ENCODE measurements at regions of chr17 and their contacts with region 1.

Region 1: DNA sequence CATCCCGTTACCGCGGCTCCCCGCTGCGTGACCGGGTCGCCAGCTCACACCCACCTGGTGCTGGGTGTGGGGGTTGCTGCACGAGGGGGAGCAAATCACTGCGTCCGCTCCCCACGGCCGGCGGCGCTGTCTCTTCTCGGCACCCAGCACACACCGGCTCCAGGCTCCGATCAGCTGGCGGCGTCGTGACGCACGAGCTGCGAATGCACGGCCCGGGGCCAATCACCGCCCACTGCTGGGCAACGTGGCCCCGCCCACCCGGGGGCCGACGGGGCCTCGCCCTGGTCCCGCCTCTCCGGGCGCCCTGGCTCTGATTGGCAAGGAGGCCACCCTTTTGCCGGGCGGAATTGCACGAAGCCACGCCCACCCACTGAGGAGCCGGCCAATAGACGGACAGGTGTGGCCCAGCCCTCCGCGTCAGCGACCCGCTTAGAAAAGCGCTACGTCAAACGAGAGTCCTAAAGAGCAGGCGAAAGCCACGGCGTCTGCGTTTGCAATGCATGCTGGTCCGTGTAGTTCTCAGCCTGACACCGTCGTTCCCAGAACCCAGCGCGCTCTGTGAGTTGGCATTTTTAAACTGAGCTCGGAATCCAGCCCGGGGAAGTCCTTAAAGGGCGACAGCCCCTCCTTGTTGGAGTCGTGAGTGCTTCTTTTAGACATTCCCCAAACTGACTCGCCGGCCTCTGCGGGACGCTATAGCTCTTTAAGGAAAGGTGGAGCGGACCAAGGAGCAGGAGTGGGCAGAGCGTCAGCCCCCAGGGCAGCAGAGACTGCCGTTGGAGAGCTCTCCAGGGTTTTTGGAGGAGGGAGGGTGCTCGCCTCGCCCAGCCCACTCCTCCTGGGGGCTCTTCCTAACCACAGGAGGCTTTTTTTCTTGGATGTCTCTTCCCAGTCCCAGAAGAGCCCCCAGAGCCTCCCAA is 6.2 kb upstream of the TLCD2 start:
- H3K4me3 ChIP-seq: peak overlapping the region; percentile 86
- H3K27ac ChIP-seq: peak overlapping the region; percentile 98
- H3K4me1 ChIP-seq: peaks cover 16% of the 10 kb centered on the region
- CTCF ChIP-seq: peak; percentile 54

Region 2: GRCh38 chr17:1532836-1533602 is 183.3 kb before region 1 on chr17:
- CTCF ChIA-PET with region 1: no interaction called
- POLR2A ChIA-PET with region 1: no interaction called
- H3K4me3 ChIP-seq: no peak overlapping the region
- H3K27ac ChIP-seq: no peak overlapping the region
- H3K4me1 ChIP-seq: no peaks in the 10 kb centered on the region
- CTCF ChIP-seq: no peak

Region 3: GRCh38 chr17:1553354-1554266 is 162.7 kb before region 1 on chr17:
- CTCF ChIA-PET with region 1: no interaction called
- POLR2A ChIA-PET with region 1: no interaction called
- H3K4me3 ChIP-seq: no peak overlapping the region
- H3K27ac ChIP-seq: no peak overlapping the region
- H3K4me1 ChIP-seq: no peaks in the 10 kb centered on the region; the same call in 1 of the 2 replicates
- CTCF ChIP-seq: no peak

Region 4: DNA sequence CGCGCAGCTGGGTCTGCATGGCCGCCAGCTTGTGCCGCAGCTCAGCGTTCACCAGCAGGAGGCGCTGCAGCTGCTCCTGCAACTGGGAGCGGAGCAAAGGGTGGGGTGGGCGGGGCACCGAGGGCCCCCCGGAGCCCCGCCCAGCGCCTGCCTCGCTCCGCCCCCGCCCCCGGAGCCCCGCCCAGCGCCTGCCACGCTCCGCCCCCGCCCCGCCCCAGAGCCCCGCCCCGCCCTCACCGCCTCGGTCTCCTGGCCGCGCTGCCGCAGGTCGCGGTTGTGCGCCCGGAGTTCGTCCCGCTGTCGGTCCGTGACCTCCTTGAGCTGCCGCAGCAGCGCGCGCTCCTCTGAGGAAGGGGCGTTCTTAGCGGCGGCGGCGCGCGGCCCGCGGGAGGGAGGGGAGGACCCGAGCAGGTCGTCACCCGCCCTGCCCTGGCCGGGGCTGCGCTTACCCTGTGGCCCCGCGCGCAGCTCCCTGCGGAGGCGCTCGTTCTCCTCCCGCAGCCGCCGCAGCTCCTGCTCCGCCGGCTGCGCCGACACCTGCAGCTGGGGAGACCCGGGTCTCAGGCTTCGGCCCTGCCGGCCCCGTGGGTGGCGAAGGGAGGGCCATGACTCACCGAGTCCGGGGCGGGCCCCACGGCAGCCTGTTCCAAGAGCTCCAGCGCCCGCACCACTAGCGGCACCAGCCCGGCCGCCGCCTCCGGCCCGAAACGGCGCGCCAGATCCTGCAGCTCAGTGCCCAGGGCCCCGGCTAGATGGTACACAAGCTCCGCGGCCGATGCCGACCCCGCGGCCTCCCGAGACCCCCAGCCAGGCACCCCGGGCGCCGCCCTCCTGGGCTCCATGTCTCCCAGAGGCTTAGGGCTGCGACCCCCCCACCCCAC is 67.1 kb before region 1 on chr17:
- CTCF ChIA-PET with region 1: interaction called, 13 read pairs
- POLR2A ChIA-PET with region 1: interaction called, 19 read pairs
- H3K4me3 ChIP-seq: peak overlapping the region; percentile 61
- H3K27ac ChIP-seq: peak overlapping the region; percentile 86
- H3K4me1 ChIP-seq: peaks cover 8% of the 10 kb centered on the region
- CTCF ChIP-seq: peak; percentile 23

Region 5: GRCh38 chr17:1684378-1685189 is 31.8 kb before region 1 on chr17 and contains the start of gene PRPF8:
- CTCF ChIA-PET with region 1: interaction called, 4 read pairs
- POLR2A ChIA-PET with region 1: interaction called, 45 read pairs
- H3K4me3 ChIP-seq: peak within 1 kb of the TSS; percentile 99
- H3K27ac ChIP-seq: peak within 1 kb of the TSS; percentile 94
- H3K4me1 ChIP-seq: peaks cover 10% of the 10 kb centered on the region; the same call in 1 of the 2 replicates
- CTCF ChIP-seq: no peak

Region 6: DNA sequence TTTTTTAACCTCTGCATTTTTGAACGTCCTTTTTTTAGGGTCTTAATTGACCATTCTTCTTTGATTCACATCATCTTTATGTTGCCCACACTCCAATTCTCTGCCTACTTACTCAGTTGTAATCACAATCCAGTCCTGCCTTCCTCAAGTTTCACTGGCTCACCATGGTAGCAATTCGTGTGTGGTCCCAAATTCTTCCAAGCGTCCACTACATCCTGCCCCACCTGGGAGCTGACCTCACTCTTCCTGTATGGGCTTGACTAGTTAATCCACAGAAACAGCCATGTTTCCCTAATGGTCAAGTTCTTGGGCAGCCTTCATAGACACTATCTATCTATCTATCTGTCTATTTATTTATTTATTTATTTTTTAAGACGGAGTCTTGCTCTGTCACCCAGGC is 13.3 kb before region 1 on chr17:
- CTCF ChIA-PET with region 1: interaction called, 13 read pairs
- POLR2A ChIA-PET with region 1: interaction called, 16 read pairs
- H3K4me3 ChIP-seq: no peak overlapping the region
- H3K27ac ChIP-seq: no peak overlapping the region
- H3K4me1 ChIP-seq: no peaks in the 10 kb centered on the region
- CTCF ChIP-seq: no peak

Region 7: GRCh38 chr17:1762901-1763898 is 46.9 kb after region 1 on chr17:
- CTCF ChIA-PET with region 1: interaction called, 4 read pairs
- POLR2A ChIA-PET with region 1: interaction called, 17 read pairs
- H3K4me3 ChIP-seq: no peak overlapping the region
- H3K27ac ChIP-seq: no peak overlapping the region
- H3K4me1 ChIP-seq: peaks cover 6% of the 10 kb centered on the region
- CTCF ChIP-seq: no peak

Region 8: DNA sequence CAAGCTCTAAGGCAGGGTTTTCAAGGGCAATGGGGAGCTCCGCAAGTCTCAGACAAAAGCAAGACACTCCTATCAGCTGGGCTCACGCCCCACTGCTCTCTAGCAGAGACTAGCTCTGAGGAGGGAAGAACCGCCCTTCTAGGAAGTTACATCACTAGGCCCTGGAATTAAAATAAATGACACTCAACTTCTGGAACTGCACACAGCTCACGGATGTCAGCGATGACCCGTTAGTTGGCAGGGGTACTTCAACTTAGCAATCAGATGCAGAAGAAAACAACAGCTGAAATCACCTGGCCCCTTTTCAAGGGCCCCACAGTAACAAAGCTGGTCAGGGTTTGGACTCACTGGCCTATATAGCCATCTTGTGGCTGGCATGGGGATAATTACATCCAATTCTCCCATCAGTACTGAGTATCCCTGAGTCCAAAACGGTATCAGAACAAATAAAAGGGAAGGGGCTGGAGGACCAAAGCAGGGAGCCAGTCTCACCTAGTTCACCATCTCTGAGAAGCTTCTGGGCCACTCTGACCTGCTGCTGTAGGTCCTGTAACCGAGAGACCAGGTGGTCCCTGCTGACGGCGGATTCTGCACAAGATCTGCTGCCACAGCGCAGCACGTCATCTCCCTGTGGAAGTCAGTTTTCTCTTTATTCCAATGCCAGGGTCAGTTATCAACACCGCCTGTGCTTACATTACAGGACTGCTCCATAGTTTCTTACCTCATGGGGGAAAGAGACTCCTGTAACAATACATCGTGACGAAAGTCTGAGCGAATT is 67.7 kb after region 1 on chr17:
- CTCF ChIA-PET with region 1: interaction called, 104 read pairs
- POLR2A ChIA-PET with region 1: interaction called, 18 read pairs
- H3K4me3 ChIP-seq: no peak overlapping the region
- H3K27ac ChIP-seq: no peak overlapping the region
- H3K4me1 ChIP-seq: peaks cover 11% of the 10 kb centered on the region
- CTCF ChIP-seq: peak; percentile 62; the same call in 1 of the 2 replicates

Measured in HEK293 (cell line).